ENCODE measurements at regions of chr3 and their contacts with region 1.

Region 1: GRCh38 chr3:30693470-30694120 is 87.2 kb downstream of the TGFBR2 start:
- DNase-seq: peak; percentile 77
- ATAC-seq: peak; percentile 80
- H3K4me3 ChIP-seq: no peak overlapping the region
- H3K27ac ChIP-seq: no peak overlapping the region
- H3K4me1 ChIP-seq: peaks cover 7% of the 10 kb centered on the region
- H3K27me3 ChIP-seq: no peaks in the 10 kb centered on the region
- CTCF ChIP-seq: peak; percentile 92
- POLR2A ChIP-seq: peak; percentile 49; the same call in 1 of the 2 replicates
- RAD21 ChIP-seq: peak; percentile 99

Region 2: DNA sequence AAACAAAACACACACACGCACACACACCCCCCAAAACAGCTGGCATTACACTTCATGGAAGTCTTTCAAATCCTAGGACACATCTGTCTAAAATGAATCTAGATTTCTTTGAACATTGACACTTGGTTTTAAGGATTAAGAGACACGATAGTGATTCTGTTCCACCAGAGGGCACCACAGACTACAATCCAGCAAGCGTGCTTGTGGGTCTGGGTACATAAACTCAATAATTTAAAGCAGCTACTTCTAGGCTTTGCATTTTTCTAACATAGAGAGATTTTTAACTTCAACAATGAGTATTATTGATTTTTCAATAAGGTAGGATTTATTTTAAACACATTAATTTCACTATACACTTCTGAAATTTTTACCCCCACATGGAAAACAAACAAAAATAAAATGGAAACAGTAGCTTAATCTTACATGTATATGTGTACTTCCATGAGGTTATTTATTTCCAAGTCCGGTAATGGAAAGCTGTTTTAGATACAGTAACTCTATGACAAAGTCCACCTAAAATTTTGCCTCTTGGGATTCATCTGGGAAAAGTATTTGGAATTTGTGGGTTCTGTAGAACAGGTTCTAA is 651.2 kb before region 1 on chr3:
- CTCF ChIA-PET with region 1: interaction called, 4 read pairs
- POLR2A ChIA-PET with region 1: no interaction called
- dilution Hi-C with region 1: no loop called
- in situ Hi-C with region 1: loop called (anchors 10 kb)
- intact Hi-C with region 1: loop called (anchors 1 kb)
- DNase-seq: peak; percentile 79
- ATAC-seq: peak; percentile 81
- H3K4me3 ChIP-seq: no peak overlapping the region
- H3K27ac ChIP-seq: no peak overlapping the region
- H3K4me1 ChIP-seq: no peaks in the 10 kb centered on the region
- H3K27me3 ChIP-seq: no peaks in the 10 kb centered on the region
- CTCF ChIP-seq: peak; percentile 88
- POLR2A ChIP-seq: no peak
- RAD21 ChIP-seq: peak; percentile 92

Region 3: GRCh38 chr3:30107531-30107930 is 586.1 kb before region 1 on chr3:
- CTCF ChIA-PET with region 1: interaction called, 4 read pairs
- POLR2A ChIA-PET with region 1: no interaction called
- dilution Hi-C with region 1: no loop called
- in situ Hi-C with region 1: loop called (anchors 5 kb)
- intact Hi-C with region 1: loop called (anchors 1 kb)
- DNase-seq: no peak
- ATAC-seq: no peak
- H3K4me3 ChIP-seq: no peak overlapping the region
- H3K27ac ChIP-seq: no peak overlapping the region
- H3K4me1 ChIP-seq: no peaks in the 10 kb centered on the region
- H3K27me3 ChIP-seq: no peaks in the 10 kb centered on the region; the same call in none of the 2 replicates
- CTCF ChIP-seq: no peak
- POLR2A ChIP-seq: no peak
- RAD21 ChIP-seq: no peak

Region 4: DNA sequence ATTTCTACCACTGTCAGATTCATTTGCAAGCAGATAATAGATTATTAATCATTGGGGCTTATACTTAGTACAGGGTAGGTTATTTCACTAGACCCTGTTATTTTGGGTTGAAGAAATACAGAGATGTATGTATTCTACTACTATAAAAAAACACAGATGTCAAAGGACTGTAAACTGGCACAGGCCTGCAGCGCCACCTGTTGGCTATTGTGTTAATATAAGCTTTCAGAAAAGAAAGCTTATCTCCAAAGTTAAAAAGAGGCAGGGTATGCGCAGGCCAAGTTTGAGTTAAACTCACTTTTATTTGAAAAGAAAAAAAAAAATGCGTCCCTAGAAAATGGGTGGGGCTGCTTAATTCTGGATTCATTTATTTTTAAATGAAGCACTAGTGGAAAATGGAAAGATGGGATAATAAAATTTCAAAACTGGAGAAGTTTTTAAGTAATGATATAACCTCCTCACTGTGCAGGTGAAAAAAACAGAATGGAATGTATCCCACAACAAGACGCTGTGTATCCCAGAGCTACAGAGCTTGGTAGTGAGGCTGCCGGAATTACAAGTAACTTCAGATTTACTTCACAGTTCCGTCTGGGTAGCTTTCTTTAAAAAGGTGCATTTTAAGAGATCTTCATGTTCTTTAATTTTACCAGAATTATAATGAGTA is 494.4 kb before region 1 on chr3:
- CTCF ChIA-PET with region 1: interaction called, 4 read pairs
- POLR2A ChIA-PET with region 1: no interaction called
- dilution Hi-C with region 1: no loop called
- in situ Hi-C with region 1: no loop called
- intact Hi-C with region 1: loop called (anchors 1 kb)
- DNase-seq: peak; percentile 55
- ATAC-seq: peak; percentile 40; the same call in 1 of the 2 replicates
- H3K4me3 ChIP-seq: no peak overlapping the region
- H3K27ac ChIP-seq: no peak overlapping the region
- H3K4me1 ChIP-seq: peaks cover 6% of the 10 kb centered on the region
- H3K27me3 ChIP-seq: no peaks in the 10 kb centered on the region
- CTCF ChIP-seq: peak; percentile 84
- POLR2A ChIP-seq: no peak
- RAD21 ChIP-seq: peak; percentile 83

Region 5: GRCh38 chr3:30496066-30496966 is 197.3 kb before region 1 on chr3:
- CTCF ChIA-PET with region 1: no interaction called
- POLR2A ChIA-PET with region 1: no interaction called
- dilution Hi-C with region 1: no loop called
- in situ Hi-C with region 1: no loop called
- intact Hi-C with region 1: loop called (anchors 5 kb)
- DNase-seq: peak; percentile 81
- ATAC-seq: peak; percentile 79
- H3K4me3 ChIP-seq: no peak overlapping the region
- H3K27ac ChIP-seq: peak overlapping the region; percentile 74
- H3K4me1 ChIP-seq: peaks cover 16% of the 10 kb centered on the region
- H3K27me3 ChIP-seq: no peaks in the 10 kb centered on the region
- CTCF ChIP-seq: no peak
- POLR2A ChIP-seq: no peak
- RAD21 ChIP-seq: no peak

Region 6: DNA sequence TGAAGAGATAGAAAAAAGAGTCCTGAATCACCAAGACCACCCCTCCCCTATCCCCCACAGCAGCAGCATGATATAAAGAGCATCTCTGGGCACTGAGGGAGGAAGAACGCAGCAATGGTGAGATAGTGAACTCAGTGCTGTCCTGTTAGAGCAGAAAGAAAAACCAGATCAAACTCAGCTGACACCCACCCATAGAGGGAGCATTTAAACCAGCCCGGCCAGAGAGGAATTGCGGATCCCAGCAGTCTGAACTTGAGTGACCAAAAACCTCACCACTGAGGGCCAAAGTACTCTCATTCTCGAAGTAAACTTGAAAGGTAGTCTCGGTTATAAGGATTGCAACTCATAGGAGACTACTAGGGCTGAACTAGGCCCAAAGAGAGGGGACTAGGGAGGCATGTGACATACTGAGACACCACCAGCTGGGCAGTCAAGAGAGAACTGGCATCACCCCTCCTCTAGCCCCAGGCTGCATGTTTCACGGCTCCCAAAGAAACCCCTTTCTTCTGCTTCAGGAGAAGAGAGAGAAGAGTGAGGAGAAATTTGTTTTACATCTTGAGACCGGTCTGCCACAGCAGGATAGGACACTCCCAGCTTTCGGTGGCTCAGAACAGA is 126.3 kb before region 1 on chr3:
- CTCF ChIA-PET with region 1: no interaction called
- POLR2A ChIA-PET with region 1: no interaction called
- dilution Hi-C with region 1: no loop called
- in situ Hi-C with region 1: no loop called
- intact Hi-C with region 1: no loop called
- DNase-seq: no peak
- ATAC-seq: no peak
- H3K4me3 ChIP-seq: no peak overlapping the region
- H3K27ac ChIP-seq: no peak overlapping the region
- H3K4me1 ChIP-seq: no peaks in the 10 kb centered on the region
- H3K27me3 ChIP-seq: no peaks in the 10 kb centered on the region
- CTCF ChIP-seq: no peak
- POLR2A ChIP-seq: no peak
- RAD21 ChIP-seq: no peak

Region 7: DNA sequence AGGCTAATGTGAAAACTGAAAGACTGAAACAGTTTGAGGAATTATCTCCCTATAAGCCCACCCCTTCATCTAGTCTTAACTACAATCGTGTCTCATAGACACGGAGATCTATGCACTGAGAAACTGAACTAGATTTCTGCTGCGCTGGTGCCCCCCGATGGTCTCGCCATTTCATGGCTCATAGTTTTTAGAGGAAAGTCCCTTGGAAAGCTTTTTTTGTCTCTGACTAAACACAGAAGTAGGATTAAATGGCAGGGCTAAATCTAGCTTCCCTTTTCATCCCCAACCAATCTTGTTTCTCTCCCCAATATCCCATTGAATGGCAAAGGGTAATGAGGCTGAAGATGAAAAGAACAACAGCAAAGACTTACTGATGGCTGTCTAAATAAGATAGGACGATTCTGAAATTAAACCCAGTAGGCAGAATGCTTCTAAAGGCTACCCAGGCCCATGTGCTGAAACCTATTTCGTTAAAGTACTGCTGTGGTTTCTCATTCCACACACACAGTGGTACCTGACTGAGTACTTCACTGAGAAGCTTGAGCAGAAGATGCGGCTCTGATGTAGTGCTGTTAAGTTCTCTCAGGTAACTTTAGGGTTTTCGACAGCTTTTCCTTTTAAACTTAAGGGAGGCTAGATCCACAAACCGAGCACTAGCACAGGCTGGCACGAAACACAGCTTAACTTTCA is 58.2 kb after region 1 on chr3:
- CTCF ChIA-PET with region 1: interaction called, 7 read pairs
- POLR2A ChIA-PET with region 1: no interaction called
- dilution Hi-C with region 1: no loop called
- in situ Hi-C with region 1: no loop called
- intact Hi-C with region 1: loop called (anchors 5 kb)
- DNase-seq: peak; percentile 62
- ATAC-seq: peak; percentile 60
- H3K4me3 ChIP-seq: no peak overlapping the region
- H3K27ac ChIP-seq: no peak overlapping the region
- H3K4me1 ChIP-seq: peaks cover 7% of the 10 kb centered on the region
- H3K27me3 ChIP-seq: no peaks in the 10 kb centered on the region
- CTCF ChIP-seq: peak; percentile 65
- POLR2A ChIP-seq: no peak
- RAD21 ChIP-seq: peak; percentile 70